ENCODE measurements at regions of chr9 and their contacts with region 1.

Region 1: DNA sequence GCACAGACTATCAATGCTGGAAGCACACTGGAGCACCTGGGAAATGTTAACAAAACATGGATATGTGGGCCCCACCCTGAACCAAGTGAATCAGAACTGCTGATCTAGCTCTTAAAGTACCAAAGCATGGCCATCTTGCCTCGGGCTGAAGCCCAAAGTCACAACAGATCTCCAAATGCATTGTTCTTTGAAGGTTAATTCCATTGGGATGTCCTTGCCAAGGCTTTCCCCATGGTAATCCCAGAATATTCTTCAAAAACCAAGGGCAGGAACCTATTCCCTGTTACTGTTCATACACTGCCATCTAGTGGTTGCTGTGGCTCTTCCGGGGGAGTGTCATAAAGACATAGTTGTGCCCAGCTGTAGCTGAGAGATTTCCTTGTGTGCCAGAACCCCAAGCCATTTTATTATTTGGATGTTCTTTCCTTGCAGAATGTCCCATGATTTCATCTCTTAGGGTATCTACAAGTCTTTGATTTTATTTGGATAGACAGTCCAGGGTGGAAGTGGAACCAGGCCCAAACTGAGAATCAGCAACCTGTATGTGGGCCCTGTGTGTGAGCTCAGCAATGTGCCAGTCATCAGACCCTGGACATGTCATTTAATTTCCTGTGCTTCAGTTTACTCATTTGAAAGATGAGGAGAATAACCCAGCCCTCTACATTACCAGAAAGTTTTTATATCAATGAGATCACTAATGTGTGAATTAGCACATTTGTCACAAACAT is 290.0 kb downstream of the ACTL7B start:
- DNase-seq: peak; percentile 30 to 53
- ATAC-seq: peak; percentile 86 to 94 (median 88)
- H3K4me3 ChIP-seq: no peak overlapping the region
- H3K27ac ChIP-seq: no peak overlapping the region
- H3K4me1 ChIP-seq: no peaks in the 10 kb centered on the region
- H3K27me3 ChIP-seq: no peaks in the 10 kb centered on the region
- CTCF ChIP-seq: peak; percentile 92

Region 2: DNA sequence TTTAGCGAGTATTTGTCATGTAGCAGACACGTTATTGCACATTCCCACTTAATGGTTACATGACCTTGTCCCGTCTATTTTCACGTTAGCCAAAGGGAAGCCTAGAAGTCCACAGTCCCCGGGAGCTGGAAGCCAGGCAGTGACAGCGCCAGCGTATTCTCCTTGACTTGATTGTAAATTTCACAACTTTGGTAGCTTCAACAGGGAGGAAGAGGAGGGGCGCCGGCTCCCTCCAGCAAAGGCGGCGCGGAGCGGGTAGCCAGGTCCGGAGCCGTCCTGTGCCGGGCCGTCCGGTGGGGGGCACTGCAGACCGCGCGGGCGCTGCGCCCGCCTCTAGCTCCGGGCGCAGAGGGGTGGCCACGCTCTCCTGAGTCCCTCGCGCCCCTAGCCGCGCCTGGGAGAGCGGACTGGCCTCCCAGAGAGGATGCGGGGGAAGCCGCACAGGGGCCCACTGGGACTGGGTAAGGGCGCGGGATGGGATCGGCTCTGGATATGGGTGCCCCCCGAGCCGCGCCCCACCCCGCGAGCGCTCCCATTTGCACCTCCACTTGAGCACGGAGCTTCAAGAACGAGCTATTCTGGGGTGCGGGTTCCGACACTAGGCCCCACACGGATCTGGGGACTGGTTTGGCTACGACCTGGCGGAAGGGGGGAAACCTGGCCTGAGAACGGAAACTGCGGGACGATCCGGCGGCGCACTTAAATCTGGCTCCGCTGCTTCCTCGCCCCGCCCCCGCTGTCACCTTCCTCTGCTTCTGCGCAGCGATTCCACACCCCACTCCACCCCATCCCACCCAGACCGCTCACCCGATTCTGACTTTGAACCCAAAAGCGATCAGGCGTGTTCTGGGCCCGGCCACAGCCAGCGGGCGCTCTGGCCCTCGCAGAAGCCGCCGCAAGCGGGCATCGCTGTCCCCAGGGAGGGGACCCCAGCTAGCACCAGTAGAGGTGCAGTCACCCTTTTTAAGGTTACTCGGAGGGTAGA is 1100.1 kb before region 1 on chr9:
- intact Hi-C with region 1: loop called (anchors 5 kb)
- DNase-seq: peak; percentile 81 to 88
- ATAC-seq: peak; percentile 97 to 100 (median 99)
- H3K4me3 ChIP-seq: peak overlapping the region; percentile 75
- H3K27ac ChIP-seq: no peak overlapping the region
- H3K4me1 ChIP-seq: peaks cover 5% of the 10 kb centered on the region
- H3K27me3 ChIP-seq: peaks cover 0 to 7% (median 0%) of the 10 kb centered on the region in 3 donors
- CTCF ChIP-seq: peak; percentile 91

Region 3: GRCh38 chr9:107484117-107484723 is 1081.6 kb before region 1 on chr9:
- intact Hi-C with region 1: loop called (anchors 5 kb)
- DNase-seq: no peak
- ATAC-seq: peak; percentile 60 to 77 (median 71)
- H3K4me3 ChIP-seq: peak overlapping the region; percentile 94
- H3K27ac ChIP-seq: peak overlapping the region; percentile 19
- H3K4me1 ChIP-seq: peaks cover 26% of the 10 kb centered on the region
- H3K27me3 ChIP-seq: no peaks in the 10 kb centered on the region
- CTCF ChIP-seq: peak; percentile 63

Region 4: GRCh38 chr9:108374626-108375025 is 191.2 kb before region 1 on chr9:
- intact Hi-C with region 1: no loop called
- DNase-seq: no peak
- ATAC-seq: no peak
- H3K4me3 ChIP-seq: no peak overlapping the region
- H3K27ac ChIP-seq: no peak overlapping the region
- H3K4me1 ChIP-seq: no peaks in the 10 kb centered on the region
- H3K27me3 ChIP-seq: no peaks in the 10 kb centered on the region
- CTCF ChIP-seq: no peak

Region 5: GRCh38 chr9:108400297-108401064 is 165.3 kb before region 1 on chr9:
- intact Hi-C with region 1: no loop called
- DNase-seq: no peak
- ATAC-seq: peak in 2 of 4 donors; percentile 32 to 60
- H3K4me3 ChIP-seq: no peak overlapping the region
- H3K27ac ChIP-seq: no peak overlapping the region
- H3K4me1 ChIP-seq: no peaks in the 10 kb centered on the region
- H3K27me3 ChIP-seq: no peaks in the 10 kb centered on the region
- CTCF ChIP-seq: no peak

Region 6: GRCh38 chr9:108412755-108413154 is 153.1 kb before region 1 on chr9:
- intact Hi-C with region 1: loop called (anchors 5 to 10 kb)
- DNase-seq: no peak
- ATAC-seq: no peak
- H3K4me3 ChIP-seq: no peak overlapping the region
- H3K27ac ChIP-seq: no peak overlapping the region
- H3K4me1 ChIP-seq: no peaks in the 10 kb centered on the region
- H3K27me3 ChIP-seq: no peaks in the 10 kb centered on the region
- CTCF ChIP-seq: no peak

Region 7: GRCh38 chr9:108468402-108468801 is 97.4 kb before region 1 on chr9:
- intact Hi-C with region 1: loop called in 1 of 2 experiments (anchors 5 kb)
- DNase-seq: peak; percentile 45 to 61
- ATAC-seq: peak; percentile 36 to 61 (median 55)
- H3K4me3 ChIP-seq: no peak overlapping the region
- H3K27ac ChIP-seq: peak overlapping the region; percentile 43
- H3K4me1 ChIP-seq: peaks cover 19% of the 10 kb centered on the region
- H3K27me3 ChIP-seq: no peaks in the 10 kb centered on the region
- CTCF ChIP-seq: peak; percentile 45

Measured in psoas muscle (tissue), 8 donors.